ENCODE measurements at regions of chr14 and their contacts with region 1.

Region 1: GRCh38 chr14:103014466-103015319 is 42.7 kb downstream of the CDC42BPB start:
- DNase-seq: peak in 1 of 2 experiments; percentile 69
- H3K4me3 ChIP-seq: peak overlapping the region; percentile 2; the same call in 1 of the 2 replicates
- H3K27ac ChIP-seq: peak overlapping the region; percentile 58
- H3K4me1 ChIP-seq: peaks cover 70% of the 10 kb centered on the region
- H3K27me3 ChIP-seq: no peaks in the 10 kb centered on the region
- CTCF ChIP-seq: no peak

Region 2: GRCh38 chr14:102982852-102983470 is 31.7 kb before region 1 on chr14:
- CTCF ChIA-PET with region 1: no interaction called
- POLR2A ChIA-PET with region 1: no interaction called
- intact Hi-C with region 1: no loop called
- DNase-seq: no peak
- H3K4me3 ChIP-seq: no peak overlapping the region
- H3K27ac ChIP-seq: no peak overlapping the region
- H3K4me1 ChIP-seq: no peaks in the 10 kb centered on the region
- H3K27me3 ChIP-seq: no peaks in the 10 kb centered on the region
- CTCF ChIP-seq: no peak; the same call in 1 of the 2 replicates

Region 3: DNA sequence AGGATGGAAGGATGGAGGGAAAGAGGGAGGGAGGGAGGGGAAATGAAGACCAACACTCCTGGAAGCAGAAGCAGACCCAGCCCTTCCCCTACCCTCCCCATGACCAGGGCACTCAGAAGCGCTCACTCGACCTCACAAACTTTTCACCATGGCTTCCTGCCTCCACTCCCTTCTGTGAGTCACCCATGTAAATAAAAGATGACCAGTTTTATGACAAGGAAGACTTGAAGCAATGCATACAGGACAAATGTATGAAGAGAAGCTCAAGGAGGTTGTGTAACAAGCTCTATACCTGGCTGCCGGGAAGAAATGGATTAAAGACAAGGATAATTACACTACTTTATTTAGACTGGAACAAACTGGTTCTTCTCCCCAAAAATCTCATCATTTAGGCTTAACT is 21.2 kb before region 1 on chr14:
- CTCF ChIA-PET with region 1: no interaction called
- POLR2A ChIA-PET with region 1: interaction called, 3 read pairs
- intact Hi-C with region 1: loop called (anchors 1 kb)
- DNase-seq: peak; percentile 80 to 100
- H3K4me3 ChIP-seq: peak overlapping the region; percentile 0; the same call in 1 of the 2 replicates
- H3K27ac ChIP-seq: peak overlapping the region; percentile 80
- H3K4me1 ChIP-seq: peaks cover 32% of the 10 kb centered on the region
- H3K27me3 ChIP-seq: no peaks in the 10 kb centered on the region
- CTCF ChIP-seq: no peak

Measured in PC-9 (cell line).